Motor neuron (in vitro differentiated cells): ENCODE measurements at regions of chr7 and their contacts with region 1.

Region 1: GRCh38 chr7:85068799-85069198 is 118.1 kb downstream of the SEMA3D start:
- ATAC-seq: peak in 5 of 8 experiments; percentile 38 to 71 (median 45)
- H3K4me3 ChIP-seq: no peak overlapping the region
- H3K27ac ChIP-seq: no peak overlapping the region
- H3K4me1 ChIP-seq: peaks cover 0 to 3% of the 10 kb centered on the region in 2 donors

Region 2: GRCh38 chr7:85160223-85160622 is 91.4 kb after region 1 on chr7:
- in situ Hi-C with region 1: loop called in 1 of 9 experiments (anchors 25 kb)
- ATAC-seq: no peak
- H3K4me3 ChIP-seq: no peak overlapping the region
- H3K27ac ChIP-seq: no peak overlapping the region
- H3K4me1 ChIP-seq: no peaks in the 10 kb centered on the region

Region 3: DNA sequence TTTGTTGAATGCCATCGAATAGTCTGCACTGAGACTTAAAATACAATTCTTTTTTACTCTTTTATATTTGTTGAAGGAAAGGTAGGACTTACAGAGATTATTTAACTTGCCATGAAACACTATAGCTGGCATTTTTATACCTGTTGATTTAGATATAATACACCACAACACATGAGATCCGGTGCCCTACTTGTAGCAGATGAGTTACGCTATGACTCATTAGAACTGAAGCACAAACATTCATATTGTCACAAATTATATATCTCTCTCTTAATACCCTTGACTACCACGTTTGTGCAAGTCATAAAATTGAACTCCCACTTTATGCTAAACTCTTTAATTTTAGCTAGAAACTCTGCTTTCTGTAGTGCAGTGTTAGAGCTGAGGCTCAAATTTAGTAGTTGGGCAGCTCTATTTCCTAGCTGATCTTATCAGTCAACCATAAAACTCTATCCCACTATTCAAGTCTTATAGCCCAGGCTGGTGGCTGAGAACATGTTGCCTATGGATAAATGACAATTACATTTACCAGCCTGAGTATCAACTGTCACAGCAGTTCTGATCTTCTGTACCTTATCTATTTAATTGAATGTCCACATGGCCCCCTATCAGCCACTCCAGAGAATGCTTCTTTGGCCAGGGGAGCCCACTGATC is 255.5 kb after region 1 on chr7:
- in situ Hi-C with region 1: no loop called
- ATAC-seq: no peak
- H3K4me3 ChIP-seq: no peak overlapping the region
- H3K27ac ChIP-seq: no peak overlapping the region
- H3K4me1 ChIP-seq: peaks cover 0 to 4% of the 10 kb centered on the region in 2 donors

Region 4: DNA sequence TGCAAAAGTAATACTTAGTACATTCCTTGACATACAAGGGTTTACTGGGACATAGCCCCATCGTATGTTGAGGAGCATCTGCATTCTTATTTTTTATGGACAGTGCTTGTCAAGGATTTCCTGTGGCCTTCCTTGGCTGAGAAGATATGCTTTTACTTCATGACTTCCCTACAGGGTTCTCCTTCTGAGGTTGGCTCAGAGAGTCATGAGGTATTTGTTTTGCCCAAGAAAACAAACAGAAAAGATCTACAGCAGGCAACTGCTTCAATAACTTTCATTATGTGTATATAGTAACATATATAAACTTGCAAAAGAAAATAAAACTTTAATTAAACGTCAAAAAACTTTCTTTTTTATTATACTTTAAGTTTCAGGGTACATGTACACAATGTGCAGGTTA is 695.2 kb after region 1 on chr7:
- in situ Hi-C with region 1: no loop called
- ATAC-seq: no peak
- H3K4me3 ChIP-seq: no peak overlapping the region
- H3K27ac ChIP-seq: no peak overlapping the region
- H3K4me1 ChIP-seq: no peaks in the 10 kb centered on the region